ENCODE measurements at regions of chr4 and their contacts with region 1.

Region 1: GRCh38 chr4:100816436-100817045 is 298.7 kb upstream of the EMCN start:
- DNase-seq: no peak
- H3K4me3 ChIP-seq: no peak overlapping the region
- H3K27ac ChIP-seq: no peak overlapping the region
- H3K4me1 ChIP-seq: no peaks in the 10 kb centered on the region
- CTCF ChIP-seq: no peak

Region 2: GRCh38 chr4:100738196-100739170 is 78.1 kb before region 1 on chr4:
- CTCF ChIA-PET with region 1: no interaction called
- POLR2A ChIA-PET with region 1: interaction called, 12 read pairs
- intact Hi-C with region 1: no loop called
- DNase-seq: no peak
- H3K4me3 ChIP-seq: no peak overlapping the region
- H3K27ac ChIP-seq: no peak overlapping the region
- H3K4me1 ChIP-seq: no peaks in the 10 kb centered on the region
- CTCF ChIP-seq: no peak